Calu3 (cell line): ENCODE measurements at regions of chr4 and their contacts with region 1.

Region 1: GRCh38 chr4:11548597-11549082 is 119.9 kb upstream of the HS3ST1 start:
- DNase-seq: peak; percentile 37
- H3K4me3 Mint-ChIP-seq: peak overlapping the region; percentile 1
- H3K27ac Mint-ChIP-seq: peak overlapping the region; percentile 93
- H3K4me1 Mint-ChIP-seq: peaks cover 60% of the 10 kb centered on the region
- H3K27me3 Mint-ChIP-seq: no peaks in the 10 kb centered on the region
- CTCF ChIP-seq: no peak

Region 2: DNA sequence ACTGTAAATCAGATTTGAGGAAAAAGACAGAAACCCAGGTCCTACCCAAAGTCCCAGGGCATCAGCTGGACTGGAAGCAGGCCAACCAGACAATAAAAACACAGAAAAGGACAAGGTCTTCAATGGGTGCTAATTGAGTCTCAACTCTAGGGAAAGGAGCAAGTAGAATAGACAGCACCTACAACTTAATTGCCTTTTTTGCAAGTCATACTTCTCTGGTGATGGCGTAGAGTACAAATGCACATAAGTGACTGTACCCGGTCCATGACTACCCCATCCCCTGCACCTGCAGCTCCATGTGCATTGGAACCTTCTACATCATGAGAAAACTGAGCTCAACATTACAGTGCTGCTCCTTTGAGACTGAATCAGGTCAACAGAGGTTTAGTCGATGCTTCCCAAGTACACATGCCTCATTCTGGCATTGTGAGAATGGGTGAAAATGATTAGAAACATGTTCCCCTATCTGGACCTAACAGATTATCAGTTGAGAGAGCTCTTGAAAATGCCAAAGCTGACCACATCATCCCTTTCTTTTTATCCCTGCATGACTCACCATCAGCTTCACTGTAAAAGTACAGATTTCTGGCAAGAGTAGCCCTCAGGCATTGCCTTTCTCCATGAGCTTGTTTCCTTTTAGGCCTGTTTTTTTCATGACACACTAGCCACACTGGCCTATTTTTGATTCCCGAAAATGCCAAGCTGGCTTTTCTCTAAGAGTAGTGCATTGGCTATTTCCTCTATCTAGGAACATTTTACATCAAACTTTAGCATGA is 418.3 kb before region 1 on chr4:
- CTCF ChIA-PET with region 1: no interaction called
- intact Hi-C with region 1: no loop called
- DNase-seq: no peak
- H3K4me3 Mint-ChIP-seq: no peak overlapping the region
- H3K27ac Mint-ChIP-seq: no peak overlapping the region
- H3K4me1 Mint-ChIP-seq: no peaks in the 10 kb centered on the region
- H3K27me3 Mint-ChIP-seq: peaks cover 36% of the 10 kb centered on the region
- CTCF ChIP-seq: no peak

Region 3: DNA sequence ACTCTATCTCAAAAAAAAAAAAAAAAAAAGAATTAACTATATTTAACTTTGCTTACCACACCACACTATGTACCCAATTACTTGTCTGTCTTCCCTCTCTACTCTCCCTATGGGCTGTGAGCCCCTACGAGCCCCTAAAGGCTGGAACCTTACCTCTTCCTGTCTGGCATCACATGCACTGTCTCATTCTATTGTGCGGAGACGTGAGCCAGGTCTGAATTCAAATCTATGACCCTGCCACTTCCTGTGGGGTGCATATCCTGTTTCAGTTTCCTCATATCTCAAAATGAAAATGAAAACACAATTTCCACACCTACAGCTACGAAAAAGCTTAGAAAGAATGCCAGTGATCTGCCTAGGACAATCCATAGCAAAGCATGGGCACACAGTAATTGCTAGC is 77.0 kb before region 1 on chr4:
- CTCF ChIA-PET with region 1: interaction called, 4 read pairs
- intact Hi-C with region 1: loop called (anchors 2 kb)
- DNase-seq: peak; percentile 27
- H3K4me3 Mint-ChIP-seq: peak overlapping the region; percentile 51
- H3K27ac Mint-ChIP-seq: peak overlapping the region; percentile 75
- H3K4me1 Mint-ChIP-seq: peaks cover 63% of the 10 kb centered on the region
- H3K27me3 Mint-ChIP-seq: no peaks in the 10 kb centered on the region
- CTCF ChIP-seq: no peak

Region 4: GRCh38 chr4:11505221-11505971 is 43.2 kb before region 1 on chr4:
- CTCF ChIA-PET with region 1: no interaction called
- intact Hi-C with region 1: loop called (anchors 2 kb)
- DNase-seq: peak; percentile 69
- H3K4me3 Mint-ChIP-seq: peak overlapping the region; percentile 25
- H3K27ac Mint-ChIP-seq: peak overlapping the region; percentile 99
- H3K4me1 Mint-ChIP-seq: peaks cover 68% of the 10 kb centered on the region
- H3K27me3 Mint-ChIP-seq: no peaks in the 10 kb centered on the region
- CTCF ChIP-seq: no peak

Region 5: GRCh38 chr4:11566444-11567022 is 17.9 kb after region 1 on chr4:
- CTCF ChIA-PET with region 1: no interaction called
- intact Hi-C with region 1: loop called (anchors 1 kb)
- DNase-seq: no peak
- H3K4me3 Mint-ChIP-seq: no peak overlapping the region
- H3K27ac Mint-ChIP-seq: no peak overlapping the region
- H3K4me1 Mint-ChIP-seq: peaks cover 16% of the 10 kb centered on the region
- H3K27me3 Mint-ChIP-seq: no peaks in the 10 kb centered on the region
- CTCF ChIP-seq: no peak

Region 6: GRCh38 chr4:11597506-11597905 is 48.9 kb after region 1 on chr4:
- CTCF ChIA-PET with region 1: no interaction called
- intact Hi-C with region 1: loop called (anchors 5 kb)
- DNase-seq: peak; percentile 26
- H3K4me3 Mint-ChIP-seq: no peak overlapping the region
- H3K27ac Mint-ChIP-seq: peak overlapping the region; percentile 92
- H3K4me1 Mint-ChIP-seq: peaks cover 50% of the 10 kb centered on the region
- H3K27me3 Mint-ChIP-seq: no peaks in the 10 kb centered on the region
- CTCF ChIP-seq: no peak

Region 7: GRCh38 chr4:11614399-11614798 is 65.8 kb after region 1 on chr4:
- CTCF ChIA-PET with region 1: interaction called, 6 read pairs
- intact Hi-C with region 1: loop called (anchors 2 kb)
- DNase-seq: peak; percentile 70
- H3K4me3 Mint-ChIP-seq: peak overlapping the region; percentile 31
- H3K27ac Mint-ChIP-seq: peak overlapping the region; percentile 89
- H3K4me1 Mint-ChIP-seq: peaks cover 82% of the 10 kb centered on the region
- H3K27me3 Mint-ChIP-seq: no peaks in the 10 kb centered on the region
- CTCF ChIP-seq: no peak

Region 8: DNA sequence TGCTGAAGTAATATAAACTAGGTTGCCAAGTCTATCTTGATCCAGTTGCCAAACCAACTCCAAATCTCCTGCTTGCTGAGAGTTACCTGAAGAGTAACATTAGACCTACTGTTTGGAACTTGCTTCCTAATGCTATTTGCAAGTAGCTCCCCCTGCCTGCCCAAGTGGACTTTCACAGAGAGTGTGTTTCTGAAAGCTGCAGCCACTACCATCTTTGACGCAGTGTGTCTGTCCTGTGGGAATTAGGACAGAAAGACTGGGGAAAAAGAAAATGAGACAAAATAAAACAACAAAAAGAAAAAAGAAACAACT is 75.0 kb after region 1 on chr4:
- CTCF ChIA-PET with region 1: interaction called, 6 read pairs
- intact Hi-C with region 1: loop called (anchors 5 kb)
- DNase-seq: peak; percentile 54
- H3K4me3 Mint-ChIP-seq: no peak overlapping the region
- H3K27ac Mint-ChIP-seq: peak overlapping the region; percentile 97
- H3K4me1 Mint-ChIP-seq: peaks cover 89% of the 10 kb centered on the region
- H3K27me3 Mint-ChIP-seq: no peaks in the 10 kb centered on the region
- CTCF ChIP-seq: no peak